ENCODE measurements at regions of chr5 and their contacts with region 1.

Region 1: GRCh38 chr5:82439750-82440445 is 161.7 kb upstream of the RPS23 start:
- DNase-seq: no peak
- ATAC-seq: no peak
- H3K4me3 ChIP-seq: no peak overlapping the region
- H3K27ac ChIP-seq: no peak overlapping the region
- H3K4me1 ChIP-seq: no peaks in the 10 kb centered on the region
- H3K27me3 ChIP-seq: no peaks in the 10 kb centered on the region
- CTCF ChIP-seq: no peak
- POLR2A ChIP-seq: no peak

Region 2: GRCh38 chr5:82045554-82046275 is 394.2 kb before region 1 on chr5:
- in situ Hi-C with region 1: no loop called
- intact Hi-C with region 1: no loop called
- DNase-seq: no peak
- ATAC-seq: no peak
- H3K4me3 ChIP-seq: no peak overlapping the region
- H3K27ac ChIP-seq: no peak overlapping the region
- H3K4me1 ChIP-seq: no peaks in the 10 kb centered on the region
- H3K27me3 ChIP-seq: no peaks in the 10 kb centered on the region
- CTCF ChIP-seq: no peak
- POLR2A ChIP-seq: no peak

Region 3: DNA sequence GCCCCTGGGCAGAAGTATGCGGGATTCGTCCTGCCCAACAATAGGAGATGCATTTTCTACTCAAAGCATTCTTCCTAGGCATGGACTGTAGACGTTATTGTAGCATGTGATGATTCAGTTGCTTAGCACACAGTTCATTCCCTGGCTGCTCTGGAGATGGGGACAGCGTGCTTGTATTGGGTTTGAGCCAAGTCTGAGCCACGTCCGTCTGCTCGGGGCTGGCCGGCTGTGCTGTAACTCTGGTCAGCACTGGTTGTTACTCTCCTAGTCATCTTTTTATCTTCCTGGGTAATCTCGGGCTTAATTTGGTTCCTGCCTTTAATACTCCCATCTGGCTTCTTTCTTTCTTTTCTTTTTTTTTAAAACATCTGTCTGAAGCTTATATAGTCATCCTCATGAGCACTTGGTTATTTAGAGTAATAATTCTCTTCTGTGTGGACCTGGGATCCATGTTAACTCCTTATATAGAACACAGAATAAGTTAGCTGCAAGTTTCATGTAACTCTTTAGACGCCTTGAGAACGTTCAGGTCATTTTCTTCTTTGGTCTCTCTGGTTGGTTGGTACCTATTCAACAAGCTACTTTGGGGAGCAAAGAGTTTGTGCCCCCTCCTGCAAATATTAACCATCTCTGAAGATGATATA is 42.9 kb before region 1 on chr5:
- in situ Hi-C with region 1: no loop called
- intact Hi-C with region 1: loop called (anchors 10 kb)
- DNase-seq: peak; percentile 38 to 58
- ATAC-seq: peak; percentile 72 to 92
- H3K4me3 ChIP-seq: no peak overlapping the region
- H3K27ac ChIP-seq: no peak overlapping the region
- H3K4me1 ChIP-seq: no peaks in the 10 kb centered on the region
- H3K27me3 ChIP-seq: no peaks in the 10 kb centered on the region
- CTCF ChIP-seq: no peak
- POLR2A ChIP-seq: no peak

Region 4: GRCh38 chr5:82560561-82560960 is 120.7 kb after region 1 on chr5:
- in situ Hi-C with region 1: no loop called
- intact Hi-C with region 1: no loop called
- DNase-seq: no peak
- ATAC-seq: no peak
- H3K4me3 ChIP-seq: no peak overlapping the region
- H3K27ac ChIP-seq: no peak overlapping the region
- H3K4me1 ChIP-seq: no peaks in the 10 kb centered on the region
- H3K27me3 ChIP-seq: no peaks in the 10 kb centered on the region
- CTCF ChIP-seq: no peak
- POLR2A ChIP-seq: no peak